ENCODE measurements at regions of chr1 and their contacts with region 1.

Region 1: DNA sequence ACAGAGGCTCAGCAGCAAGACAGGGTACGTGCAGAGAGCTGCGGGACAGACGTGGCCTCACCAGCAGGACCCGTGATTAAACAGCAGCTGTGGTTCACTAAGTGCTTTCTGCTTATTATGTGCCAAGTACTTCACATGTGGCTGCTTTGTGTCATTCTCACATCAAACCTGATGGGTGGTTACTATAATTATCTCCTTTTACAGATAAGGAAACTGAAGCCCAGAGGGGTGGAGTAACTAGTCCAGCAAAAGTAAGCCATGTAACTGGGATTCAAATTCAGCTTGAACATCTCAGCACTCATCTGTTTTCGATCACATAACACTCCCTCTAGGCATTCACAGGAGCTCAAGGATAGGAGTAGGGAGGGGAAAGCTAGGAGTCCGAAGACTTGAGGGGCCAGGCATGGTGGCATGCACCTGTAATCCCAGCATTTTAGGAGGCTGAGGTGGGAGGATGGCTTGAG is 50.8 kb upstream of the CLIC4 start:
- DNase-seq: peak; percentile 77
- ATAC-seq: peak; percentile 91

Region 2: GRCh38 chr1:24744911-24745710 is 50.7 kb after region 1 on chr1 and contains the start of gene CLIC4:
- intact Hi-C with region 1: loop called (anchors 5 kb)
- DNase-seq: peak; percentile 100
- ATAC-seq: peak; percentile 94
- total RNA-seq, gene CLIC4: 334 TPM

Measured in Right ventricle myocardium superior (tissue), 1 donor.